Activated naive CD4-positive, alpha-beta T cell treated with anti-CD3 and anti-CD28 coated beads, Interleukin-2, amount 10 ng/mL, durations not matched to agents 7 days and 5 days (primary cell): ENCODE measurements at regions of chr5 and their contacts with region 1.

Region 1: GRCh38 chr5:14727428-14727865 is 62.9 kb downstream of the OTULIN start:
- DNase-seq: peak; percentile 80
- H3K4me3 Mint-ChIP-seq: no peak overlapping the region
- H3K27ac Mint-ChIP-seq: no peak overlapping the region
- H3K4me1 Mint-ChIP-seq: peaks cover 4% of the 10 kb centered on the region
- H3K27me3 Mint-ChIP-seq: no peaks in the 10 kb centered on the region

Region 2: GRCh38 chr5:14513266-14513665 is 214.2 kb before region 1 on chr5:
- CTCF ChIA-PET with region 1: no interaction called
- DNase-seq: no peak
- H3K4me3 Mint-ChIP-seq: no peak overlapping the region
- H3K27ac Mint-ChIP-seq: no peak overlapping the region
- H3K4me1 Mint-ChIP-seq: no peaks in the 10 kb centered on the region
- H3K27me3 Mint-ChIP-seq: peaks cover 17% of the 10 kb centered on the region

Region 3: DNA sequence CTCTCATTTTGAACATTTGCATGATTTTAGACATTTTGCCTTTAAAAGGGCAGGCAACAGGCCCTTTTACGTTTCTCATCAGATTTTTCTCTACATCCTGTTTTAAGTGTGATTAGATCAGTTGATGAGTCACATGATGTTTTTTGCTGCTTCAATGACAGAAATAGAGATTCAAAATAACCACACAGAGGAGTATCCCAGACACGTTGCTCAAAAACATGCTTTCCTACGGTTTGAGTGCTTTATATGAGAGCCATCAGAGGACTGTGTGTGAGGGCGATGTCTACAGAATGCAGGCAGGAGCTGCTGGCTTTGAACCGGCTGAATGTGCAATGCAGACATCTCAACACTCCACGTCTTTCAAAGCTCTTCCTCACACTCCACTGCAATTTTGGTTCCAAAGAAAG is 20.8 kb before region 1 on chr5:
- CTCF ChIA-PET with region 1: interaction called, 12 read pairs
- DNase-seq: peak; percentile 59
- H3K4me3 Mint-ChIP-seq: peak overlapping the region; percentile 75
- H3K27ac Mint-ChIP-seq: peak overlapping the region; percentile 100
- H3K4me1 Mint-ChIP-seq: peaks cover 81% of the 10 kb centered on the region
- H3K27me3 Mint-ChIP-seq: no peaks in the 10 kb centered on the region

Region 4: DNA sequence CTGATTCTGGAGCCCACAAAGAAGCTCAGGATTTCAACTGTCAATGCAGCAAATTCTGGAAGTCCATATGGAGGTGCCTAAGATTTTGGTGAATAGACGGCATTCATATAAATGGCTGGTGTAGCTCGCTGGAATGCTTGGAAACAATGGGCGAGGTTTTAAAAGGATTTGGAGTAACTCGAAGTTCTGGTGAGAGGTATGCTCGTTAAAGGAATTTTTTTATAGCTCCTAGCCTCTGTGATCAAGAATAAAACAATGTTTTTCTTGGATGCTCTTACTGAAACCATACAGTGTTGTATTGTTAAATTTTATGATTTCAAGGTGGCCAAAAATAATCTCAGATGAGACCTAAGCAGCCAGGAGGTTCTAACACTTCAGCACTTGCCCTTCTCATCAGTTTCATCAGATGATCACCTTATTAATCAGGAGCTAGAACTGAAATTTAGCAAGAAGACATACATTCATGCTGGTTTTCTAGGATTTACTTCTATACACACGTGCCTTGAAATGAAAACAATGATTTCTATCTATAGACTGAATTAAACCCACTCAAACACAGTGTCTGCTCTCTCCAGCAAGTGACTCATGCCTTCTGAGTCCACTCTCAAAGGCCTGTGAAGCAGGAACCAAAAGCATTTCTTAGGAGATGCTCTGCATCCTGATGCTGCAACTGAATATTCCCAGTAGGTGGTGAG is 16.3 kb after region 1 on chr5:
- CTCF ChIA-PET with region 1: interaction called, 13 read pairs
- DNase-seq: no peak
- H3K4me3 Mint-ChIP-seq: no peak overlapping the region
- H3K27ac Mint-ChIP-seq: no peak overlapping the region
- H3K4me1 Mint-ChIP-seq: peaks cover 25% of the 10 kb centered on the region
- H3K27me3 Mint-ChIP-seq: no peaks in the 10 kb centered on the region

Region 5: GRCh38 chr5:14871210-14872069 is 144.0 kb after region 1 on chr5 and contains the start of gene ANKH:
- CTCF ChIA-PET with region 1: interaction called, 25 read pairs
- DNase-seq: peak; percentile 85
- H3K4me3 Mint-ChIP-seq: peak within 1 kb of the TSS; percentile 92
- H3K27ac Mint-ChIP-seq: peak within 1 kb of the TSS; percentile 91
- H3K4me1 Mint-ChIP-seq: peaks cover 33% of the 10 kb centered on the region
- H3K27me3 Mint-ChIP-seq: no peaks in the 10 kb centered on the region

Region 6: GRCh38 chr5:15013654-15014463 is 286.4 kb after region 1 on chr5:
- CTCF ChIA-PET with region 1: interaction called, 11 read pairs
- DNase-seq: no peak
- H3K4me3 Mint-ChIP-seq: no peak overlapping the region
- H3K27ac Mint-ChIP-seq: no peak overlapping the region
- H3K4me1 Mint-ChIP-seq: no peaks in the 10 kb centered on the region
- H3K27me3 Mint-ChIP-seq: peaks cover 6% of the 10 kb centered on the region

Region 7: GRCh38 chr5:15215056-15215455 is 487.6 kb after region 1 on chr5:
- CTCF ChIA-PET with region 1: no interaction called
- DNase-seq: no peak
- H3K4me3 Mint-ChIP-seq: no peak overlapping the region
- H3K27ac Mint-ChIP-seq: no peak overlapping the region
- H3K4me1 Mint-ChIP-seq: no peaks in the 10 kb centered on the region
- H3K27me3 Mint-ChIP-seq: no peaks in the 10 kb centered on the region

Region 8: DNA sequence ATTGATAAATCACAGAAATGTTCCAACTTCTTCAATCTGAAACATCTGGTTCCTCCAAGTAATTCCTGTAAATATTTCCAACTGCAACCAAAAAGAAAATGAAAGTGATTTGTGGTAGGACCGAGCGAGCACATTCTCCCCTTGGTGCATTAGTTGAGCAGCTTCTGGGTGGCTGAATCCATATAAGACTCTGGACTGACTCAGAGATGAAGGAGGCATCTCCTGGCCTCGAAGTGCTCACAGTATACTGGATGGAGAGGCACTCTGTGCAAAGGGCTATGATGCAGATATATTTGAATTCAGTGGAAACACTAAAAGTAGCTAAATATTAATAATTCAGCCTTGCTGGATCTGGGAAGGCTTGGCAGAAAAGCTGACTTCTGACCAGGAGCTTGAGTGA is 1187.2 kb after region 1 on chr5:
- CTCF ChIA-PET with region 1: no interaction called
- DNase-seq: no peak
- H3K4me3 Mint-ChIP-seq: no peak overlapping the region
- H3K27ac Mint-ChIP-seq: no peak overlapping the region
- H3K4me1 Mint-ChIP-seq: no peaks in the 10 kb centered on the region
- H3K27me3 Mint-ChIP-seq: no peaks in the 10 kb centered on the region